ENCODE measurements at regions of chr11 and their contacts with region 1.

Region 1: GRCh38 chr11:111982019-111982464 is 43.2 kb upstream of the DLAT start:
- DNase-seq: peak in 40 of 42 donors; percentile 17 to 77 (median 55)

Region 2: DNA sequence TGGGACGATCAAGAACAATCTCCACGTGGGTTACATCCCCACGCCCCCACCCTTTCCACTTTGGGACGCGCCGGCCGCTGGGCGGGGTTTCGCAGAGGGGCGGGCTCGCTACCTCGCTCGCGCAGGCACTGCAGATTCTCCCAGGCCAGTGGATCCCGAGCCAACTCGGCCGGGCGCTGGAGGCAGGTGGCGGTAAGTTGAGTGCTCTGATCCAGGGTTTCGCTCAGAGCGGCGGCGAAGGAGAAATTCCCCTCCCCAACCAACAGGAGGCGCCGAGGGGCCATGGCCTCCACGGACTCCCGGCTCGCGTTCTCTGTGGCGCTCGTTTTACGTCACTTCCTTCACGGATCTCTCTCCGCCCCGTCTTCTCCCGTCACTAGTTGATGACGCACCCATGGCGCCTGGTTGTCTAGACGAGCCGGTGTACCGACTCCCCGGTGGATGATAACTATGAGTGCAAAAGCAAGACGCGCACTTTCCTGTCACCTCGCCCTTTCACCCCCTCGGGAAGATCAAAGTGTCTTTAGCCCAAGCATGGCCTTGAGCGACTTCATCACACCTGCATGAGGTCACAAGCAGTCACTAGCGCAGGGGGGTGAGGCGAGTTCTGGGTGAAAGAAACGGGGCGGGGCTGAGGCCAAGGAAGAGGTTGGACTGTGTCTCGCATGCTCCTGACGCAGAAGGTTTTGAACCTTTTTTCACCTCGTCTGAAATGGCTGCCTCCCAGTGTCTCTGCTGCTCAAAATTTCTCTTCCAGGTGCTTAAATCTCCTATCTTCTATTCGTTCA is 103.0 kb before region 1 on chr11 and contains the starts of genes CFAP68 and FDXACB1:
- intact Hi-C with region 1: loop called (anchors 5 kb)
- DNase-seq: peak; percentile 94 to 99 (median 98)

Region 3: GRCh38 chr11:111911563-111912401 is 70.3 kb before region 1 on chr11 and contains the start of gene CRYAB:
- intact Hi-C with region 1: loop called (anchors 5 kb)
- DNase-seq: peak; percentile 80 to 97 (median 92)

Region 4: DNA sequence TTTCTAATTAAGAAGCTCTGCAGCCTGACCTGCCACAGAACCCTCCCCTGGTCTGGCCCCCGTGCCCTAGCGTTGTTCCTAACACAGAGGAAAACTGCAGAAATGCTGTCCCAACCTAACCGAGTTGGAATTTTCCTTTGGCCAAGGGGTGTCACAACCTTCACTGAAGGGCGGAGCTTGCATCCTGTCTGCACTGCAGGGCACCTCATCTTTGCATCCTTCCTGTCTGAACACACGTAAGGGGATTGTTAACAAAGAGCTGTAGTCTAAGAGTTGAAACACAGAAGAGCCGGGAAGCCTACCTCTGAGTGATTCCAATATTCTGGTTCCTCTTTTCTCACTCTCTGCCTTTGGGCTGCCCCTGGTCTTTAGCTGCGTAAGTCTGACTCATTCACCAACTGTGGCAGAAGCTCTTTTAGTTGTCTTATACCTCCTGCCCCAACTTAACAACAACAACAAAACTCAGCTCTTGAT is 43.3 kb before region 1 on chr11:
- intact Hi-C with region 1: loop called (anchors 5 kb)
- DNase-seq: peak in 4 of 42 donors; percentile 21 to 48 (median 40)

Measured in head of caudate nucleus (tissue), 42 donors.